CD4-positive, alpha-beta T cell (primary cell): ENCODE measurements at regions of chr12 and their contacts with region 1.

Region 1: GRCh38 chr12:66301944-66302826 is at the start of gene HELB:
- DNase-seq: peak; percentile 89 to 100 (median 96)
- ATAC-seq: peak; percentile 76
- H3K4me3 ChIP-seq: peak within 1 kb of the TSS; percentile 87
- H3K4me3 Mint-ChIP-seq: peak within 1 kb of the TSS; percentile 97
- H3K27ac ChIP-seq: peak within 1 kb of the TSS; percentile 86 to 89
- H3K27ac Mint-ChIP-seq: peak within 1 kb of the TSS; percentile 87
- H3K4me1 ChIP-seq: peaks cover 17% of the 10 kb centered on the region
- H3K4me1 Mint-ChIP-seq: peaks cover 59% of the 10 kb centered on the region
- H3K27me3 ChIP-seq: no peaks in the 10 kb centered on the region
- H3K27me3 Mint-ChIP-seq: no peaks in the 10 kb centered on the region
- CTCF ChIP-seq: no peak
- total RNA-seq, gene HELB: 33.8 to 35.8 TPM

Region 2: GRCh38 chr12:66269757-66270383 is 32.3 kb before region 1 on chr12:
- CTCF ChIA-PET with region 1: interaction called, 6 read pairs
- POLR2A ChIA-PET with region 1: interaction called, 14 read pairs
- intact Hi-C with region 1: loop called in 1 of 2 experiments (anchors 5 kb)
- DNase-seq: peak in 5 of 14 experiments; percentile 7 to 72 (median 67)
- ATAC-seq: peak; percentile 73
- H3K4me3 ChIP-seq: no peak overlapping the region
- H3K4me3 Mint-ChIP-seq: no peak overlapping the region
- H3K27ac ChIP-seq: no peak overlapping the region
- H3K27ac Mint-ChIP-seq: no peak overlapping the region
- H3K4me1 ChIP-seq: peaks cover 20% of the 10 kb centered on the region
- H3K4me1 Mint-ChIP-seq: peaks cover 6% of the 10 kb centered on the region
- H3K27me3 ChIP-seq: no peaks in the 10 kb centered on the region
- H3K27me3 Mint-ChIP-seq: no peaks in the 10 kb centered on the region
- CTCF ChIP-seq: peak; percentile 83

Region 3: GRCh38 chr12:66279123-66279712 is 23.0 kb before region 1 on chr12:
- CTCF ChIA-PET with region 1: interaction called, 22 read pairs
- POLR2A ChIA-PET with region 1: interaction called, 24 read pairs
- intact Hi-C with region 1: loop called in 1 of 2 experiments (anchors 2 kb)
- DNase-seq: peak; percentile 29 to 74 (median 42)
- ATAC-seq: peak; percentile 76
- H3K4me3 ChIP-seq: no peak overlapping the region
- H3K4me3 Mint-ChIP-seq: peak overlapping the region; percentile 2
- H3K27ac ChIP-seq: no peak overlapping the region
- H3K27ac Mint-ChIP-seq: no peak overlapping the region
- H3K4me1 ChIP-seq: peaks cover 27% of the 10 kb centered on the region
- H3K4me1 Mint-ChIP-seq: peaks cover 66% of the 10 kb centered on the region
- H3K27me3 ChIP-seq: no peaks in the 10 kb centered on the region
- H3K27me3 Mint-ChIP-seq: no peaks in the 10 kb centered on the region
- CTCF ChIP-seq: peak; percentile 83

Region 4: DNA sequence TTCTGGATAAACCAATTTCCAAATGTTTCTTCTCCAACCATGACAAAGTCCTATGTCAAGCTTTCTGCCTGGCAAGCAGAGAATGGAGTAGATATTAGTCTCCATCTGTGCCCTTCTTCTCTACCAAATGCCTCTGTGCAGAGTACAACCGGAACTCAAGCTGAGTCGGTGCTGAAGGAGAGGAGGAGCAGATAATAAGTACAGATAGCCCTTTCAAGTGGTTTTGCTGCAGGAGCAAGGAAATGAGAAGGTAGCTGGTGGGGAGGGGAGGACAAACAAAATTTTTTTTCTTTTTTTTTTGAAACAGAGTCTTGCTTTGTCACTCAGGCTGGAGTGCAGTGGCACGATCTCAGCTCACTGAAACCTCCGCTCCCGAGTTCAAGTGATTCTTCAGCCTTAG is 14.1 kb before region 1 on chr12:
- CTCF ChIA-PET with region 1: interaction called, 7 read pairs
- POLR2A ChIA-PET with region 1: interaction called, 97 read pairs
- intact Hi-C with region 1: loop called (anchors 1 kb)
- DNase-seq: peak; percentile 28 to 93 (median 56)
- ATAC-seq: peak; percentile 97
- H3K4me3 ChIP-seq: peak overlapping the region; percentile 24
- H3K4me3 Mint-ChIP-seq: peak overlapping the region; percentile 55
- H3K27ac ChIP-seq: peak overlapping the region in 1 of 2 donors; percentile 25
- H3K27ac Mint-ChIP-seq: peak overlapping the region; percentile 84
- H3K4me1 ChIP-seq: peaks cover 79% of the 10 kb centered on the region
- H3K4me1 Mint-ChIP-seq: peaks cover 87% of the 10 kb centered on the region
- H3K27me3 ChIP-seq: no peaks in the 10 kb centered on the region
- H3K27me3 Mint-ChIP-seq: no peaks in the 10 kb centered on the region
- CTCF ChIP-seq: no peak